Activated CD8-positive, alpha-beta memory T cell treated with anti-CD3 and anti-CD28 coated beads, Interleukin-2, amount 10 ng/mL, durations not matched to agents 7 days and 5 days (primary cell): ENCODE measurements at regions of chr5 and their contacts with region 1.

Region 1: DNA sequence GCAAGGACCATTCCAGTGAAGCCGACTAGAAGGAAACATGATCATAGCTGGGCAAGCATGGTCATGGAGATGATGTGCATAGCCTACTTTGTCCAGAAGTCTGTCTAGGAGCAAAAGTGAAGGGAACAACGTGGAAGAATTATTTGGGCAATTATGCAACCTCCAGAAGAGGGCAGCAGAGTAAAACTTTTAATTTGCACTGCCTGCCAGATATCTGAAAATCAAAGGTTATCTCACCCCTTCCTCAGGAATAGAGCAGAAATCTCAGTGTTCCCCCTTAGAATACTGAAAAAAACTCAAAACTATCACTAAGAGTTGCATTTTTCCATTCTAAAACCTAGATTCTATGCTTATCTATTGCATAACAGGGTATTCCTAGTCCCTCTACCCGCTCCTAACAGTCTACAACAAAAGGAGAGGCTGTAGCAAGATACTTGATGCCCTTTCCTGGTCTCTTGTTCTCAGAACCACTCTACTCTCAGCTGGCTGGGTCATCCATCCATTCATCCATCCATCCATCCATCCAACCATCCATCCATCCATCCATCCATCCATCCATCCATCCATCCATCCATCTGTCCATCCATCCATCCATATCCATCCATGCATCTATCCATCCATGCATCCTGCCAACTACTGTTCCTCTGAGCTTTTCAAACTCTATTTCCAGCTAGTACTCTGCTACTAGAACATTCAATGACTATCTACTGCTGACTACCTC is 8.4 kb upstream of the SETD9 start:
- DNase-seq: no peak
- ATAC-seq: peak; percentile 68
- H3K4me3 Mint-ChIP-seq: no peak overlapping the region
- H3K27ac Mint-ChIP-seq: no peak overlapping the region
- H3K4me1 Mint-ChIP-seq: no peaks in the 10 kb centered on the region
- H3K27me3 Mint-ChIP-seq: peaks cover 11% of the 10 kb centered on the region

Region 2: DNA sequence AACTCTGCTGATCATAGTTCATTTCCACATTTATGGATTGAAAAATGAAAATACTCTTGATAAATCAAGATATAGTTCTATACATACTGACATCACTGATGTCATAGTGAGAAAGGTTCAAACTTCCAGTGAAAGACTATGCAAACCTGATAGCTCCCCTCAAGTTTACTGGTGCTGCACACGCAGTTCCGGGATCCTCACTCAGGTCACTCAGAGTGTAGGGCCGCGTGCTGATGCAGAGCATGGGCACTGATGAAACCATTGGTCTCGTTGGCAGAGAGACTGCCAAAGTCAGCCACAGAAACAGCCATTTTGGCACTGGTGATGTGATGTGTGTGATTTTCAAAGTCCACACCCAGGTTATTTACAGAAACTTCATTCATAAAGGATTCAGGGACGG is 21.9 kb after region 1 on chr5:
- CTCF ChIA-PET with region 1: no interaction called
- DNase-seq: no peak
- ATAC-seq: no peak
- H3K4me3 Mint-ChIP-seq: no peak overlapping the region
- H3K27ac Mint-ChIP-seq: no peak overlapping the region
- H3K4me1 Mint-ChIP-seq: peaks cover 9% of the 10 kb centered on the region
- H3K27me3 Mint-ChIP-seq: no peaks in the 10 kb centered on the region

Region 3: GRCh38 chr5:56950626-56951125 is 49.7 kb after region 1 on chr5:
- CTCF ChIA-PET with region 1: interaction called, 10 read pairs
- DNase-seq: peak; percentile 68
- ATAC-seq: peak; percentile 41
- H3K4me3 Mint-ChIP-seq: peak overlapping the region; percentile 93
- H3K27ac Mint-ChIP-seq: peak overlapping the region; percentile 83
- H3K4me1 Mint-ChIP-seq: peaks cover 20% of the 10 kb centered on the region
- H3K27me3 Mint-ChIP-seq: peaks cover 28% of the 10 kb centered on the region